ENCODE measurements at regions of chr4 and their contacts with region 1.

Region 1: DNA sequence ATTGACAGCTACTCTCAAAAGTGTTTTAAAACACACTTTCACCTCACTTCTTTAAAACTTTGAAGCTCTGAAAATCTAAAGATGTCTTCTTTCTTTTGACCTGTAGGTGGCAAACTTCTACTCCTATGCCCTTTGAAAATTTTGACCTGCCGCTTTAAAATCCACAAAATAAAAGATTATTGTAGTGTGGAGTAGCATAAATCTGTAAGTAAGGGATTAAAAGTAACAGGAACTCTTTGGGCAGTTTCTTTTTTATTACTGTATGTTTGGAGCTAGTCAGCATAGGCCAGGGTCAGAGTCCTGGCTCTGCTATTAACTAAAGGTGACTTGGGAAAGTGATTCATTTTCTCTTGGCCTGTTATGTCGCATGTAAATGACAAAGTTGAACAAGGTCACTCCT is 25.5 kb downstream of the BBS12 start:
- DNase-seq: no peak
- H3K4me3 ChIP-seq: no peak overlapping the region
- H3K27ac ChIP-seq: peak overlapping the region; percentile 39
- H3K4me1 ChIP-seq: peaks cover 19% of the 10 kb centered on the region
- H3K27me3 ChIP-seq: no peaks in the 10 kb centered on the region
- CTCF ChIP-seq: peak; percentile 84

Region 2: DNA sequence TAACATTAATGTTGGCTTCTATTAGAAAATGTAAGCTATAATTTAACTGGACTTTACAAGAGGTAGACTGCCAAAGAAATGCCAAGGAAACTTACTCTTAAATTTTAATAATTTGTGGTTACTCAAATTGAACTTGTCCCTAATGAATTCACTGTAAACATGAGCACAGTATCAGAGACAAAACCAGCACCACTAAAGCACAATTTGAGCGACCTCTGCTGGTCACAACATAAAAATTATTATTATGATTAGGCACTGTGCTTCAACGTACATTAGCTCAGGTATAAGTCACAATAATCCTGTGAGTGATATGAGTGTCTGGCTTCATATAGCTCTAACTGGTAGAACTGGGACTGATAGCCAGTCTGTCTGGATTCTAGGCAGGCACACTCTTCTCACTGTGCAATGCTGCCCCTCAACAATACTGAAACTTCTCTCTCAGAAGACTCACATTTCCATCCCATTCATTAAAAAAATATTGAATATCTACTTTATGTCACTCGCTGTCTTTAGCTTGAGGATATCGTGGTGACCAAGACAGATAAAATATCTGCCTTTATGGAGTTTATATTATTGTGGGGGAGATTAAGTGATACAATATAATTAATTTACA is 156.4 kb after region 1 on chr4:
- intact Hi-C with region 1: loop called (anchors 5 kb)
- DNase-seq: no peak
- H3K4me3 ChIP-seq: no peak overlapping the region
- H3K27ac ChIP-seq: no peak overlapping the region
- H3K4me1 ChIP-seq: no peaks in the 10 kb centered on the region
- H3K27me3 ChIP-seq: no peaks in the 10 kb centered on the region
- CTCF ChIP-seq: peak; percentile 65

Region 3: GRCh38 chr4:124262211-124263179 is 1504.5 kb after region 1 on chr4:
- intact Hi-C with region 1: loop called (anchors 5 kb)
- DNase-seq: no peak
- H3K4me3 ChIP-seq: no peak overlapping the region
- H3K27ac ChIP-seq: no peak overlapping the region
- H3K4me1 ChIP-seq: no peaks in the 10 kb centered on the region
- H3K27me3 ChIP-seq: no peaks in the 10 kb centered on the region
- CTCF ChIP-seq: peak; percentile 91

Measured in left ventricle myocardium inferior (tissue), 1 donor.